ENCODE measurements at regions of chr17 and their contacts with region 1.

Region 1: DNA sequence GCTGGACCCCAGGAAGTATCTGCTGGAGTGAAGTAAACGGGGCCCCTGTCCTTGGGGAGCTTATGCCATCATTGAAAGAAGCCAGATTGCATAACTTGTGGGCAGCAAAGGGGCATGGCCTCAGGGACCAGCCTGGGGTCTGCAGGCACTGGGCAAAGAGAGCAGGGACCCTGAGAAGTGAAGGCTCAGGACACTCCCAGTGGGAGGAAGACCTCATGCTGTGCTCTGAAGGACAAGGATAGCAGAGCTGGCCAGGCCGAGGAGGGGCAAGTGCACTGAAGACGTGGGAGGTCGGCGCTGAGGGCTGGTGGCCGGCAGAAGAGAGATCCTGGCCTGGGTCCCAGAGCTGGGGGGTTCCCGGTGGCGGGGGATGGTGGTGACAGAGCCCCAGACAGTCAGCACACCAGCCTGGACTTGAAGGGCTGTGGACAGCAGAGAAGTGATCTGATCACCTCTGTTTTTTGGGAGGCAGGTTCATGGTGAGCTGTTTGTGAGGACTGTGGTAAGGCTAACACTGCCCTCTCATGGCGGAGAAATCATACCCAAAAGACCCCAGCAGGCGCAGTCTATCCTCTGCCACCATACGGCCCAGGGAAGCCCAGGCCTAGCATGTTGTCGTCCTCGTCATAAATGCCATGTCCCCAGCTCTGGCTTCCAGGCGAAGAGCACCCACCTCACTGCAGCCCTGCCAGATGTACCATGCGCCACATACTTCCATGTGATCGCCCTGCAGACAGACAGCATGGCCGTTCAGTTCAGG is 7.1 kb upstream of the CNP start:
- DNase-seq: peak; percentile 41

Region 2: GRCh38 chr17:41724476-41725050 is 235.0 kb before region 1 on chr17:
- in situ Hi-C with region 1: loop called (anchors 10 kb)
- DNase-seq: no peak

Region 3: GRCh38 chr17:41801374-41802271 is 157.9 kb before region 1 on chr17:
- in situ Hi-C with region 1: loop called (anchors 10 kb)
- DNase-seq: peak; percentile 83

Region 4: DNA sequence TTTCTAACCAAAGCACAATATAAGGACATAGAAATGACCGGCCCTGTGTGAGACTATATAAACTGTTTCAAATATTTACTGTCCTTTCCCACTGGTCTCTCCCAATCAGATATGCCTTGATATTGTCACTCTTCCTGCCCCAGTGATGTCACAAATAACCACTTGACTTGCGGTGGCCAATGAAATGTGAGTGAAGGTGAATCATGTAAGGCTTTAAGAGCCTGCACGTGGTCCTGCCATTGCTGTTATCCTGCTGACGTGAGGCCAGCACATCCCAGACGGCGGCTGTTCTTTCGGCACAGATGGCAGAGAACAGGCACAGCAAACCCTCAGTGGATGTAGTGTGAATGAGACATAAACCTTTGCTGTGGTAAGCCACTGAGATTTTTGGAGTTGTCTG is 88.9 kb before region 1 on chr17:
- in situ Hi-C with region 1: no loop called
- DNase-seq: no peak